Activated CD4-positive, alpha-beta T cell treated with anti-CD3 and anti-CD28 coated beads for 36 hours (primary cell): ENCODE measurements at regions of chr6 and their contacts with region 1.

Region 1: GRCh38 chr6:52976591-52977035 is 18.5 kb downstream of the GSTA4 start:
- DNase-seq: peak; percentile 73
- ATAC-seq: peak; percentile 88
- H3K4me3 Mint-ChIP-seq: peak overlapping the region; percentile 38
- H3K27ac Mint-ChIP-seq: peak overlapping the region; percentile 93
- H3K4me1 Mint-ChIP-seq: peaks cover 46% of the 10 kb centered on the region
- H3K27me3 Mint-ChIP-seq: peaks cover 5% of the 10 kb centered on the region

Region 2: DNA sequence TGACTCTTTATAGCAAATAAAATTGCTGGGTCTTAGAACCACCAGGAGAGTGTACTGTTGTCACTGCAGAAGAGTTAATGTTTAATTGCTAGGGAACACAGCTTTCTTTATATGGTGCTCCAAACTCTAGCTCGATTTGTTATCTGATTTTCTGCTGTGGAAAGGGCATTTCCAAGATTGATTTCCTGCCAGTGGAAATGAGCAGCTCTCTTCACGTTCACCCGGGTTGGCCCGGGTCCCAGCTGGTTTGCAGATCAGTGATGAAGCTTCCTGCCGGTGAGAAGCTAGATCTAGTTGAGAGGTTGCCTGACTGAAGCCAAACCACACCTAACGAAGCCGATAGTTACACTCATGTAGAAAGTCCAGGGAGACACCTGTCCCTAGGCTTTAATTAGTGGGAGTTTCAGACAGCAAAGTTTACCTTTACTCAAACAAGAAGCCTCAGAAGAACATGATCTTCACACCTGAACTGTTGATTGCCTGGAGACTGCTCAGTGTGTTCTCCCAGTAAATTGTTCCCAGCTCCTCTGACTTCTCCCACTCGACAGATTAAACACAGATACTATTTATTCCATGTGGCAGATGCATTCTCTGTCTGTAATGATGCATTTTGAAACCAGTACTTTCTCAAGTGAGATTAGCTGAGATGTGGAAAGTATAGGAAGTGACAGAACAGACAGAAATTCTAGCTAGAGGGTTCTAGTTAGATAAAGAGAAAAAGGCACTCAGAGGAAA is 586.8 kb before region 1 on chr6:
- CTCF ChIA-PET with region 1: no interaction called
- POLR2A ChIA-PET with region 1: no interaction called
- intact Hi-C with region 1: loop called in 1 of 2 experiments (anchors 5 kb)
- DNase-seq: peak; percentile 74
- ATAC-seq: peak; percentile 52
- H3K4me3 Mint-ChIP-seq: peak overlapping the region; percentile 38
- H3K27ac Mint-ChIP-seq: peak overlapping the region; percentile 86
- H3K4me1 Mint-ChIP-seq: peaks cover 85% of the 10 kb centered on the region
- H3K27me3 Mint-ChIP-seq: no peaks in the 10 kb centered on the region

Region 3: GRCh38 chr6:52881996-52882841 is 94.4 kb before region 1 on chr6:
- CTCF ChIA-PET with region 1: interaction called, 3 read pairs
- POLR2A ChIA-PET with region 1: no interaction called
- intact Hi-C with region 1: loop called in 1 of 2 experiments (anchors 5 kb)
- DNase-seq: peak; percentile 77
- ATAC-seq: peak; percentile 98
- H3K4me3 Mint-ChIP-seq: peak overlapping the region; percentile 73
- H3K27ac Mint-ChIP-seq: peak overlapping the region; percentile 81
- H3K4me1 Mint-ChIP-seq: peaks cover 8% of the 10 kb centered on the region
- H3K27me3 Mint-ChIP-seq: no peaks in the 10 kb centered on the region

Region 4: GRCh38 chr6:52887910-52888535 is 88.6 kb before region 1 on chr6:
- CTCF ChIA-PET with region 1: no interaction called
- POLR2A ChIA-PET with region 1: no interaction called
- intact Hi-C with region 1: loop called (anchors 2 to 5 kb)
- DNase-seq: no peak
- ATAC-seq: peak; percentile 72
- H3K4me3 Mint-ChIP-seq: no peak overlapping the region
- H3K27ac Mint-ChIP-seq: peak overlapping the region; percentile 5
- H3K4me1 Mint-ChIP-seq: peaks cover 26% of the 10 kb centered on the region
- H3K27me3 Mint-ChIP-seq: peaks cover 3% of the 10 kb centered on the region

Region 5: GRCh38 chr6:52990342-52990741 is 13.7 kb after region 1 on chr6:
- CTCF ChIA-PET with region 1: interaction called, 5 read pairs
- POLR2A ChIA-PET with region 1: no interaction called
- intact Hi-C with region 1: loop called (anchors 1 to 2 kb)
- DNase-seq: peak; percentile 53
- ATAC-seq: peak; percentile 48
- H3K4me3 Mint-ChIP-seq: peak overlapping the region; percentile 13
- H3K27ac Mint-ChIP-seq: peak overlapping the region; percentile 83
- H3K4me1 Mint-ChIP-seq: peaks cover 64% of the 10 kb centered on the region
- H3K27me3 Mint-ChIP-seq: peaks cover 4% of the 10 kb centered on the region